ENCODE measurements at regions of chr5 and their contacts with region 1.

Region 1: GRCh38 chr5:43008369-43009153 is 31.6 kb downstream of the ANXA2R start:
- DNase-seq: peak; percentile 80 to 96 (median 91)
- ATAC-seq: peak; percentile 63 to 71
- H3K4me3 Mint-ChIP-seq: peak overlapping the region; percentile 83 to 99 (median 94)
- H3K27ac Mint-ChIP-seq: peak overlapping the region; percentile 92 to 100 (median 99)
- H3K4me1 Mint-ChIP-seq: peaks cover 17 to 40% (median 28%) of the 10 kb centered on the region in 4 donors
- H3K27me3 Mint-ChIP-seq: no peaks in the 10 kb centered on the region

Region 2: GRCh38 chr5:42908509-42909488 is 99.8 kb before region 1 on chr5:
- POLR2A ChIA-PET with region 1: interaction called, 34 read pairs
- DNase-seq: peak; percentile 78 to 96 (median 90)
- ATAC-seq: peak; percentile 92 to 93
- H3K4me3 Mint-ChIP-seq: peak overlapping the region; percentile 82 to 98 (median 94)
- H3K27ac Mint-ChIP-seq: peak overlapping the region; percentile 89 to 98 (median 97)
- H3K4me1 Mint-ChIP-seq: peaks cover 2 to 22% (median 18%) of the 10 kb centered on the region in 4 donors
- H3K27me3 Mint-ChIP-seq: peaks cover 0 to 3% (median 0%) of the 10 kb centered on the region in 5 donors

Region 3: GRCh38 chr5:42982107-42982622 is 26.4 kb before region 1 on chr5:
- POLR2A ChIA-PET with region 1: no interaction called
- DNase-seq: no peak
- ATAC-seq: no peak
- H3K4me3 Mint-ChIP-seq: no peak overlapping the region
- H3K27ac Mint-ChIP-seq: peak overlapping the region in 1 of 10 donors; percentile 39
- H3K4me1 Mint-ChIP-seq: peaks cover 11 to 40% (median 31%) of the 10 kb centered on the region in 4 donors
- H3K27me3 Mint-ChIP-seq: no peaks in the 10 kb centered on the region

Region 4: DNA sequence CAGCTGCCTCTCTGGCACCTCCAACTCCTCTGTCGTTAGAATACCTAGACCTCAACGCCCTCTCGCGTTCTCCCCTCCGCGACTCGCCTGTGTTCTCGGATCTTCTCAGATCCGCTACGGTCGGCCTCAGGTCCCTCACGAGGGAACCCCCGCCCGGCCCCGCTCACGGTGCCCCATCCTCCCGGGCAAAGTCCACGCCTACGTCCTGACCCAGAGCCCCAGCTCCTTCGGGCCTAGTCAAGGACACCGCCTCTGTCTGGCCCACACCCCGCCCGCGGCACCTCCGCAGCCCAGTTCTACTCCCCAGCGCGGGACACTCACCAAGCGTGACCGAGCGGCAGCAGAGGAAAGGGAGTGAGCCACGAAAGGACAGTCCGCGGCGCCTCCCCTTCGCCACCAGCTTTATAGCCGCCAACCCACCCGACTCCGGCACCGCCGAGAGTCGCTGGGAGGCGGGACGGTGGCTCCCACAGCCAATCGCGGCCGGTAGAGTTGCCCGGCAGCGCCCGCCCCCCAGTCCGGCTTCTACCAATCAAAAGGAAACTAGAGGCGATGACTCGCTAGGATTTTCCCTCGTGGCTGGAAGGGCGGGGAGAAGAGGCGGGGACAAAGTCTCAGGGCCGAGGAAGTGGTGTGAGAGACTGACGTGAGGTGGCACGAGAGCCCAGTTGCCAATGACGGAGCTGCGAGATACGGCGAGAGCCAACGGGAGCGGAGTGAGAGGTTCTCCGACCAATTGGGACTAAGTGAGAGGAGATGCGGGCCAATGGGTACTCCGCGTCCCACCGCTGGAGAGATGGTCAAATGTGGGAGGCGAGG is 304.7 kb after region 1 on chr5 and contains the start of gene HMGCS1:
- POLR2A ChIA-PET with region 1: interaction called, 14 read pairs
- DNase-seq: peak; percentile 94 to 100 (median 99)
- ATAC-seq: peak; percentile 90 to 92
- H3K4me3 Mint-ChIP-seq: peak within 1 kb of the TSS; percentile 90 to 99 (median 97)
- H3K27ac Mint-ChIP-seq: peak within 1 kb of the TSS; percentile 90 to 99 (median 96)
- H3K4me1 Mint-ChIP-seq: peaks cover 22 to 40% (median 34%) of the 10 kb centered on the region in 4 donors
- H3K27me3 Mint-ChIP-seq: peaks cover 0 to 2% (median 0%) of the 10 kb centered on the region in 5 donors
- polyA plus RNA-seq, gene HMGCS1: 4.0 to 11.6 (median 4.2) TPM

Measured in naive thymus-derived CD8-positive, alpha-beta T cell (primary cell).